ENCODE measurements at regions of chr3 and their contacts with region 1.

Region 1: DNA sequence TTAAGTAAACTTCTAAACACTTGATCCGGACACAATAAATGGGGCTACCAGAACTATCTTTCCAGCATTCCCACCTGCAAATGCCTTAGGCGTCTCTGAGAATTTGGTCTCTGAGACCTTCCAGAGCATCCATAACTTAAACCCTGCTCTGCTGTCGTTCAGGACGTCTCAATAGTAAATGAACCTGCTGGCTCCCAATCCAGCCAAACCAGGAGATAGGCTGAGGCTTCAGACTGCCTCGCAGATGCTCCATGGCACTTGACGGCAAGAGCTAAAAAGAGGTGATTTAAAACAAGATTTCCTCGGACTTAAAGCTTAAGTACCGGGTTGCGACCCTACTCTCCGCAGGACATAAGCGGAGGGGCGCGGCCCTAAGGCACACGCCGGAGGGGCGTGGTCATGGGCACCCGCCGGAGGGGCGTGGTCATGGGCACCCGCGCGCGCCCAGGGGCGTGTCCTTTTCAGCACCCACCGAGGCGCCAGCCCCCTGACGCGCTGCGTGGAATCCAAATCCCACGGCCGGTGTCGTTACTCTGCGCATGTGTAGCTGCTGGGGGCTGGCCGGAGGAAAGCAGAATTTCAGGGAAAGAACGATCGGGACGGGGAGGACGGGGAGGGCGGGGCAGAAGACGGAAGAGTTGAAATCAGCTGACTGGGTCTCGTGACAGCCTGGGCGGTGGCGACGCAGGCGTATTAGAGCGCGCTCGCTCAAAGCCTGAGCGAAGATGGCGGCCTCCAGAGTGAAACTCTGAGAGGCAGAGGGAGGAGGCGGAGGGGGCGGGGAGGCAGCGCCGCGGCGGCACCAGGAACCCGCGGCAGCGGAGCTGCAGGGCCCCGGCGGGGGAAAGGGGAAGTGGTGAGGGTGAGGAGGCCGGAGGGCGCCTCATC is at the start of gene DNAJC13:
- DNase-seq: peak; percentile 99
- ATAC-seq: peak; percentile 87
- H3K4me3 ChIP-seq: peak within 1 kb of the TSS; percentile 84 to 99 (median 93)
- H3K4me3 Mint-ChIP-seq: peak within 1 kb of the TSS; percentile 100
- H3K27ac ChIP-seq: peak within 1 kb of the TSS; percentile 87 to 90
- H3K27ac Mint-ChIP-seq: peak within 1 kb of the TSS; percentile 98
- H3K4me1 ChIP-seq: peaks cover 12 to 13% of the 10 kb centered on the region in 2 donors
- H3K4me1 Mint-ChIP-seq: peaks cover 34% of the 10 kb centered on the region
- H3K27me3 ChIP-seq: no peaks in the 10 kb centered on the region
- H3K27me3 Mint-ChIP-seq: no peaks in the 10 kb centered on the region
- CTCF ChIP-seq: no peak
- total RNA-seq, gene DNAJC13: 51.1 and 56.0 TPM in 2 replicates

Region 2: DNA sequence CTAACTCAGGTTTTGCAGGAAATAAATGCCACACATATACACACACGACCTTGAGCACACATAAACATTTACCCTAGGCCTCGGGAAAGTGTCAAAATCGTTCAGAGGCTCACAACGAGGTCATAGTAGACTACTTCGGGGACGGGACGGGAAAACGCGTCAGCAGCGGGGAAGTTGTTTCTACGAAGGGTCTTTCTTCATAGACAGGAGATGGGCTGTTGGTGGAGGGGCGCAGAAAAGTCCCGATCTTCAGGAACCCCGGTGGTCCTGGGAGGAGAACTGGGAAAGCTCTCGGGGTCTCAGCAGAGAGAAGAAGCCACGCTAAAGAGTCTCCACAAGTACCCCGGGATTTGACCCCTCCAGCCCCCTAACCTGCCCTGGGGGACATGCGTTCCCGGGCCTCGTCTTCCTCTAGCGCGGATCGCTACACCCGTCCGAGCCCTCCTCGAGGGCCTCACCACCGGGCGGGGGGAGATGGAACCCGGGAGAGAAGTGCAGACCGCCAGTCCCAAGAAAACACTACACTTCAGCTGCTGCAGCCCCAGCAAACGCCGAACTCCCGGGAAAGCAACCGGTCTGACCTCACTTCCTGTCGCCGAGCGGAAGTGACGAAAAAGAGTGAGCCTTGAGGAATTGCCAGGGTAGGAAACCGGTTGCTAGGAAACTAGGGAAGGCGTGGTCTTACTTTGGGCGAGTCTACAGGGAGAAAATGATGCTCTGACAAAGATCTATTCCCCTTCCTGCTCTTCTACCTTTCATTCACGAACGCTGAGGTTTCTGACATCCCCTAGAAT is 1670.6 kb before region 1 on chr3 and contains the start of gene PIK3R4:
- CTCF ChIA-PET with region 1: no interaction called
- POLR2A ChIA-PET with region 1: no interaction called
- intact Hi-C with region 1: loop called (anchors 5 kb)
- DNase-seq: peak; percentile 97
- ATAC-seq: peak; percentile 85
- H3K4me3 ChIP-seq: peak within 1 kb of the TSS; percentile 71 to 96 (median 95)
- H3K4me3 Mint-ChIP-seq: peak within 1 kb of the TSS; percentile 96
- H3K27ac ChIP-seq: peak within 1 kb of the TSS; percentile 76 to 93
- H3K27ac Mint-ChIP-seq: peak within 1 kb of the TSS; percentile 95
- H3K4me1 ChIP-seq: peaks cover 24 to 28% of the 10 kb centered on the region in 2 donors
- H3K4me1 Mint-ChIP-seq: peaks cover 42% of the 10 kb centered on the region
- H3K27me3 ChIP-seq: no peaks in the 10 kb centered on the region
- H3K27me3 Mint-ChIP-seq: no peaks in the 10 kb centered on the region
- CTCF ChIP-seq: no peak
- total RNA-seq, gene PIK3R4: 27.1 and 32.8 TPM in 2 replicates

Region 3: DNA sequence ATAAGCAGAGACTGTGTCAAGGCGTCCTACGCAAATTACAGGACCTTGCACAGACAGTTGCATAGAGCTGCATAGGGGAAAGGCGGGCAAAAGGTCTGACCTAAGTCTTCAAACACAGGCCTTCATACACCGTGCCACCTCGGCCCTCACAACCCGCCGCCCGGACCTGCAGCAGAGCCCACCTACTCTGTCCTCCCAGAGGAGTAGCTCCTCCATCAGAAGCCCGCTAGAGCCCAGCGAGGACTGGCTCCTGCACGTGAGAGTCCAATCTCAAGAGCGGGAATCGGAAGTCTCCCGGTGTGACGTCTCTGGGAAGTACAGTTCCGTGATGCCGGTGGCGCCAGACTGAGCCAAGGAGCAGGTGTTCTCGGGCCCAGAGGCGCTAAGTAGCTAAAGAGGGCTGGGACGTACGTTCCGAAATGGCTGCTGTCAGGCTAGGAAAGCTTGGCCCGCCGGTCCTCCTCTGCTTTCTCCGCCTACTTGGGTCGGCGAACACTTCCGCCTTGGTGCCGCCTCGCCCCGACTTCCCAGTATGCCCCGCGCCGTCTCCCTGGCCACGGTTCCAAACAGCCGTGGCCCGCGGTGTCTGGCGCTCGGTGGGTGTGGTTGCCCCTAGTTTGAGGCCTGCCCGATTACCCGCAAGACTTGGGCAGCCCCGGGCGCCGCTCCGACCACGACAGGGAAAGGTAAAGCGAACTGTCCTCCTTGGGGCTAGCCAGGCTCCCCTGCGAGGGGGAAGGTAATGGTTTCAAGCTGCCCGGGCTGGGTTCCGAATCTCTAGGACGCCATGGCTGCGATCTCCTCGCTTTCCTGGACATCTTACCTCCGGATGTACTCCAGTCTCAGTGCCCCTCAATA is 1390.5 kb before region 1 on chr3 and contains the starts of genes ASTE1 and NEK11:
- CTCF ChIA-PET with region 1: no interaction called
- POLR2A ChIA-PET with region 1: interaction called, 3 read pairs
- intact Hi-C with region 1: loop called (anchors 1 kb)
- DNase-seq: peak; percentile 94
- ATAC-seq: peak; percentile 97
- H3K4me3 ChIP-seq: peak within 1 kb of the TSS; percentile 90 to 95 (median 91)
- H3K4me3 Mint-ChIP-seq: peak within 1 kb of the TSS; percentile 97
- H3K27ac ChIP-seq: peak within 1 kb of the TSS; percentile 91 to 94
- H3K27ac Mint-ChIP-seq: peak within 1 kb of the TSS; percentile 98
- H3K4me1 ChIP-seq: peaks cover 31 to 32% of the 10 kb centered on the region in 2 donors
- H3K4me1 Mint-ChIP-seq: peaks cover 48% of the 10 kb centered on the region
- H3K27me3 ChIP-seq: no peaks in the 10 kb centered on the region
- H3K27me3 Mint-ChIP-seq: no peaks in the 10 kb centered on the region
- CTCF ChIP-seq: no peak
- total RNA-seq, gene ASTE1: 21.8 and 23.0 TPM in 2 replicates
- total RNA-seq, gene NEK11: 5.7 and 7.7 TPM in 2 replicates

Region 4: DNA sequence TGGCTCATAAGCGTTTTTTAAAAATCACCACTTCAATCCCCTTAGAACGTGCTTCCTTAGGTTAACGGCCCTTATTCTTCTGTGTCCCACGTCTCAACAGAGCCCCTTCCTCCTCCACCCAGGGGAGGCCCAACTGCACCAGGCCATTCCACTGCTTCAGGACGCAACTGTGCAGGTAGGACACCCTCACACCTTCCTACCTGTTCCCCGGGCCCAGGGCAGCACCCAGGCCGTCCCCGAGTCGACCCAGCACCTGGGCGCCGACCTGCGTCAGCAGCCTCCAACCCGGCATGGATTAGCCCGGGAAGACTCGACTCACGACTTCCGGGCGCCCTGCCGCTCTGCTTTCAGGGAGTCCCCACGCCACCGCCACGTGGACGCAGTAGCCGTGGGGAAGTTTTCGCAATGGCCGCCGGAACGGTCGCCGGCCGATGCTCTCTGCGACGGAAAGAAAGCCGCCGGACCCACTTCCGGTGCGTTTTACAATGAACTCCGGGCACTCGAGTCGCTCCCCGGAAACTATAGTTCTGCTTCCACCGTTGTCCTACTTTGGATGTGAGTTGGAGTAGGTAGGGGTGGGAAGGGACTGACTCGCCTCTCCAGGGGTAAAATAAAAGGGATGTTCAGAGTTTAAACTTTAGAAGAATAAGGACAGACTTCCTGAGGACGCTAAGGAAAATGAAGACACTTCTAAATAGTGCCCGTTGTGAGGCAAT is 914.4 kb before region 1 on chr3 and contains the start of gene MRPL3:
- CTCF ChIA-PET with region 1: no interaction called
- POLR2A ChIA-PET with region 1: no interaction called
- intact Hi-C with region 1: loop called (anchors 2 kb)
- DNase-seq: peak; percentile 91
- ATAC-seq: peak; percentile 90
- H3K4me3 ChIP-seq: peak within 1 kb of the TSS; percentile 72 to 97 (median 89)
- H3K4me3 Mint-ChIP-seq: peak within 1 kb of the TSS; percentile 97
- H3K27ac ChIP-seq: peak within 1 kb of the TSS; percentile 53 to 80
- H3K27ac Mint-ChIP-seq: peak within 1 kb of the TSS; percentile 93
- H3K4me1 ChIP-seq: peaks cover 21 to 25% of the 10 kb centered on the region in 2 donors
- H3K4me1 Mint-ChIP-seq: peaks cover 36% of the 10 kb centered on the region
- H3K27me3 ChIP-seq: peaks cover 0 to 2% (median 0%) of the 10 kb centered on the region in 4 experiments
- H3K27me3 Mint-ChIP-seq: no peaks in the 10 kb centered on the region
- CTCF ChIP-seq: no peak
- total RNA-seq, gene MRPL3: 40.9 and 50.1 TPM in 2 replicates

Region 5: GRCh38 chr3:132317229-132317948 is 99.7 kb before region 1 on chr3 and contains the start of gene ACP3:
- CTCF ChIA-PET with region 1: no interaction called
- POLR2A ChIA-PET with region 1: no interaction called
- intact Hi-C with region 1: no loop called
- DNase-seq: peak; percentile 28
- ATAC-seq: peak; percentile 51
- H3K4me3 ChIP-seq: peak within 1 kb of the TSS in 1 of 5 experiments; percentile 1
- H3K4me3 Mint-ChIP-seq: peak within 1 kb of the TSS; percentile 53
- H3K27ac ChIP-seq: no peak within 1 kb of the TSS
- H3K27ac Mint-ChIP-seq: no peak within 1 kb of the TSS
- H3K4me1 ChIP-seq: peaks cover 0 to 7% of the 10 kb centered on the region in 2 donors
- H3K4me1 Mint-ChIP-seq: peaks cover 7% of the 10 kb centered on the region
- H3K27me3 ChIP-seq: no peaks in the 10 kb centered on the region
- H3K27me3 Mint-ChIP-seq: peaks cover 4% of the 10 kb centered on the region
- CTCF ChIP-seq: no peak
- total RNA-seq, gene ACP3: 0.39 and 0.64 TPM in 2 replicates

Region 6: DNA sequence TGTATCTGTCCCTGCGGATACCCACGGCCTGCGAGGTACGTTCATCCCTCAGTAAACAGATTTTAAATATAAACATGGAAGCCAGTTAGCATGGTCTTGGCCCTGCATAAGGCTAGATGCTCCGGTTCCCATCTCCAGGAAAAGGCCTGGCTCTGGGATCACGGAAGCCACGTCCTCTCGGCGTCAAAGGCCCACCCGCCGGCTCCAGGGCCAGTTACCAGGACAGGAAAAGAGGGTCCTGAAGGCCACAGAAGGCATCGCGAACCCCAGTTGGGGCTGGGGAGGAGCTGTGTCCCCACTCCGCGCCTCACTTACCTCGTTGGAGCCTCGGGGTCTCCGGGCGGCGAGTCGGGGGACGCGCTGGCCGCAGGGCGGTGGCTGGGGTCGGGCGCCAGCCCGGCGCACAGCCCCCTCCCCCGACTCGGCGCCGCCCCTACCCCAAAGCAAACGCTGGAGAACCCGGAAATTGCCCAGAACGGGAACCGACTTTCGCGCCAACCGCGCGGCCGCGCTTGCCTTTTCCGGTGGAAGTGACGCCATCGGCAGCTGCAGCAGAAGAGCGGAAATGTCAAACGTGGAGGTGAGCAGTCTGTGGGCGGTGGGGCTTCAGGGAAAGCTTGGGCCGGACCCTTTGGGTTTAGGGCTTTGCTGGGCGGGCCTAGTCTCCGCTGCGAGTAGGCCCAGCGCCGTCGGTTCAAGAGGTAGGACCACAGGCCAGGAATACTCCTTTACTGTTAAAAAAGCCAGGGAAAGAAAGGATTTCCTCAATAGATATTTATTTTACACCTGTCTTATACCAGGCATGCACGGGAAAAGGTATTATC is 1244.6 kb after region 1 on chr3 and contains the start of gene TOPBP1:
- CTCF ChIA-PET with region 1: no interaction called
- POLR2A ChIA-PET with region 1: no interaction called
- intact Hi-C with region 1: loop called (anchors 5 kb)
- DNase-seq: peak; percentile 88
- ATAC-seq: peak; percentile 84
- H3K4me3 ChIP-seq: peak within 1 kb of the TSS; percentile 74 to 95 (median 91)
- H3K4me3 Mint-ChIP-seq: peak within 1 kb of the TSS; percentile 98
- H3K27ac ChIP-seq: peak within 1 kb of the TSS; percentile 67 to 87
- H3K27ac Mint-ChIP-seq: peak within 1 kb of the TSS; percentile 95
- H3K4me1 ChIP-seq: peaks cover 19 to 26% of the 10 kb centered on the region in 2 donors
- H3K4me1 Mint-ChIP-seq: peaks cover 41% of the 10 kb centered on the region
- H3K27me3 ChIP-seq: no peaks in the 10 kb centered on the region
- H3K27me3 Mint-ChIP-seq: no peaks in the 10 kb centered on the region
- CTCF ChIP-seq: no peak
- total RNA-seq, gene TOPBP1: 47.7 and 53.7 TPM in 2 replicates

Region 7: DNA sequence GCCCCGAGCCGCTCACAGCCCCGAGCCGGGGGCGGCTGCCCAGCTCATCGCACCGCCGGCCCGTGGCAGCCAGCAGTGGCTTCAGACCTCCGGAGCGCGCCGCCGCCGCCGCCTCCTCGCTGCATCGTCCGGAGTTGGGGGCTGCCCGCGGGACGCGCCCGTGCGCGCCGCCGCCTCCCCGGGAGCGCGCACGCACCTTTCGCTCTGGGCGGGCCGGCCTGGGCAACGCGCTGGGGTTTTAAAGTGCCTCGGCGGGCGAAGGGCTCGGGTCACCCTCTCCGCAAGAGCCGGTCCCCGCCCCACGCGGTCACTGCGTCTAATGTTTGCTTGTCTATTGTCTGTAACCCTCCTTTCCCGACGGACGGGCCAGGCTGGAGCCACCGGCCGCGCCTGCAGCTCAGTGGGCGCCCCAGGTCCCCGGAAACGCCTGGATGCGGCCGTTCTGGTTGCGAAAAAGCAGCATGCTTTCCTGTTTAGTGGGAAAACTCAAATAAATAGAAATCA is 1833.7 kb after region 1 on chr3 and contains the start of gene RYK:
- CTCF ChIA-PET with region 1: no interaction called
- POLR2A ChIA-PET with region 1: no interaction called
- intact Hi-C with region 1: loop called (anchors 10 kb)
- DNase-seq: peak; percentile 90
- ATAC-seq: peak; percentile 73
- H3K4me3 ChIP-seq: peak within 1 kb of the TSS; percentile 69 to 90 (median 74)
- H3K4me3 Mint-ChIP-seq: peak within 1 kb of the TSS; percentile 93
- H3K27ac ChIP-seq: peak within 1 kb of the TSS; percentile 71 to 82
- H3K27ac Mint-ChIP-seq: peak within 1 kb of the TSS; percentile 93
- H3K4me1 ChIP-seq: peaks cover 29 to 30% of the 10 kb centered on the region in 2 donors
- H3K4me1 Mint-ChIP-seq: peaks cover 49% of the 10 kb centered on the region
- H3K27me3 ChIP-seq: no peaks in the 10 kb centered on the region
- H3K27me3 Mint-ChIP-seq: no peaks in the 10 kb centered on the region
- CTCF ChIP-seq: no peak
- total RNA-seq, gene RYK: 63.9 and 67.7 TPM in 2 replicates